Right ventricle myocardium inferior (tissue), 1 donor: ENCODE measurements at regions of chr4 and their contacts with region 1.

Region 1: DNA sequence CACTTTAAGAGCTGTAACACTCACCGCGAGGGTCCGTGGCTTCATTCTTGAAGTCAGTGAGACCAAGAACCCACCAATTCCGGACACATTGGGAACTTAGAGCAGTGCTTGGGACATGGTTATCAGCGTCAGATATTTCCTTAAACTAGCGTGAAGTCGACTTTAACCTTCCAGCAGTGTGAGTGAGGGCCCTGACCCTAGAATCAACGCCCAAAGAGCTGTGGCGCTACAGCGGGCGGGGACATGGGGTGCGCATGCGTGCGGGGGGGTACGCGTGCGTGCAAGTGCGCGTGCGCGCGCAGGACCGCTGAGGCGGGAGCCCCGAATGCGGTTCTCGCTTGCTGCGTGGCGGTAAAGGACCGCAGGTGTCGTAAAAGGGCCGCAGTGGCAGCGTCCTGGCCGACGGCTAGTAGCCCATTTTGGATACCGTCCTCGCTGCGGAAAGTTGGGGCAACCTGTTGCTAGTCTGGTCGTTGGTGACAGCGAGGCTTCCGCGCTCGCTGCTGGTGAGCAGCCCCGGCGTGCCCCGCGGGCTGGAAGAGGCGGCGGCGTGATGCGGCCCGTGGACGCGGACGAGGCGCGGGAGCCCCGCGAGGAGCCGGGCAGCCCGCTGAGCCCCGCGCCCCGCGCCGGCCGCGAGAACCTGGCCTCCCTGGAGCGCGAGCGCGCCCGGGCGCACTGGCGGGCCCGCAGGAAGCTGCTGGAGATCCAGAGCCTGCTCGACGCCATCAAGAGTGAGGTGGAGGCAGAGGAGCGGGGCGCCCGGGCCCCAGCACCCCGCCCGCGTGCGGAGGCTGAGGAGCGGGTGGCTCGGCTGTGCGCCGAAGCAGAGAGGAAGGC is 19.8 kb upstream of the S100P start:
- DNase-seq: peak; percentile 96
- ATAC-seq: peak; percentile 96

Region 2: GRCh38 chr4:6709230-6710114 is 35.6 kb after region 1 on chr4 and contains the start of gene MRFAP1L1:
- intact Hi-C with region 1: loop called (anchors 2 kb)
- DNase-seq: peak; percentile 98
- ATAC-seq: peak; percentile 92
- total RNA-seq, gene MRFAP1L1: 41.7 TPM

Region 3: GRCh38 chr4:6768539-6768905 is 94.6 kb after region 1 on chr4:
- intact Hi-C with region 1: no loop called
- DNase-seq: no peak
- ATAC-seq: no peak